CD8-positive, alpha-beta T cell (primary cell): ENCODE measurements at regions of chr2 and their contacts with region 1.

Region 1: GRCh38 chr2:72887754-72888437 is 688 bp downstream of the SPR start:
- DNase-seq: peak in 8 of 9 experiments; percentile 31 to 64 (median 52)
- ATAC-seq: peak; percentile 24
- H3K4me3 ChIP-seq: peak overlapping the region; percentile 49 to 70
- H3K4me3 Mint-ChIP-seq: peak overlapping the region; percentile 77
- H3K27ac ChIP-seq: no peak overlapping the region
- H3K27ac Mint-ChIP-seq: no peak overlapping the region
- H3K4me1 ChIP-seq: peaks cover 6% of the 10 kb centered on the region
- H3K4me1 Mint-ChIP-seq: peaks cover 7% of the 10 kb centered on the region
- H3K27me3 ChIP-seq: peaks cover 1 to 17% of the 10 kb centered on the region in 2 experiments
- H3K27me3 Mint-ChIP-seq: peaks cover 56% of the 10 kb centered on the region
- CTCF ChIP-seq: peak; percentile 54

Region 2: GRCh38 chr2:72770879-72771461 is 116.9 kb before region 1 on chr2:
- CTCF ChIA-PET with region 1: interaction called, 7 read pairs
- POLR2A ChIA-PET with region 1: no interaction called
- intact Hi-C with region 1: loop called in 1 of 2 experiments (anchors 1 kb)
- DNase-seq: peak; percentile 10 to 80 (median 57)
- ATAC-seq: peak; percentile 49
- H3K4me3 ChIP-seq: no peak overlapping the region
- H3K4me3 Mint-ChIP-seq: no peak overlapping the region
- H3K27ac ChIP-seq: no peak overlapping the region
- H3K27ac Mint-ChIP-seq: no peak overlapping the region
- H3K4me1 ChIP-seq: no peaks in the 10 kb centered on the region
- H3K4me1 Mint-ChIP-seq: no peaks in the 10 kb centered on the region
- H3K27me3 ChIP-seq: no peaks in the 10 kb centered on the region
- H3K27me3 Mint-ChIP-seq: no peaks in the 10 kb centered on the region
- CTCF ChIP-seq: peak; percentile 94

Region 3: GRCh38 chr2:72901426-72901825 is 13.5 kb after region 1 on chr2:
- CTCF ChIA-PET with region 1: interaction called, 11 read pairs
- POLR2A ChIA-PET with region 1: no interaction called
- intact Hi-C with region 1: no loop called
- DNase-seq: no peak
- ATAC-seq: no peak
- H3K4me3 ChIP-seq: no peak overlapping the region
- H3K4me3 Mint-ChIP-seq: no peak overlapping the region
- H3K27ac ChIP-seq: no peak overlapping the region
- H3K27ac Mint-ChIP-seq: no peak overlapping the region
- H3K4me1 ChIP-seq: no peaks in the 10 kb centered on the region
- H3K4me1 Mint-ChIP-seq: no peaks in the 10 kb centered on the region
- H3K27me3 ChIP-seq: peaks cover 2 to 4% of the 10 kb centered on the region in 2 experiments
- H3K27me3 Mint-ChIP-seq: peaks cover 54% of the 10 kb centered on the region
- CTCF ChIP-seq: no peak

Region 4: DNA sequence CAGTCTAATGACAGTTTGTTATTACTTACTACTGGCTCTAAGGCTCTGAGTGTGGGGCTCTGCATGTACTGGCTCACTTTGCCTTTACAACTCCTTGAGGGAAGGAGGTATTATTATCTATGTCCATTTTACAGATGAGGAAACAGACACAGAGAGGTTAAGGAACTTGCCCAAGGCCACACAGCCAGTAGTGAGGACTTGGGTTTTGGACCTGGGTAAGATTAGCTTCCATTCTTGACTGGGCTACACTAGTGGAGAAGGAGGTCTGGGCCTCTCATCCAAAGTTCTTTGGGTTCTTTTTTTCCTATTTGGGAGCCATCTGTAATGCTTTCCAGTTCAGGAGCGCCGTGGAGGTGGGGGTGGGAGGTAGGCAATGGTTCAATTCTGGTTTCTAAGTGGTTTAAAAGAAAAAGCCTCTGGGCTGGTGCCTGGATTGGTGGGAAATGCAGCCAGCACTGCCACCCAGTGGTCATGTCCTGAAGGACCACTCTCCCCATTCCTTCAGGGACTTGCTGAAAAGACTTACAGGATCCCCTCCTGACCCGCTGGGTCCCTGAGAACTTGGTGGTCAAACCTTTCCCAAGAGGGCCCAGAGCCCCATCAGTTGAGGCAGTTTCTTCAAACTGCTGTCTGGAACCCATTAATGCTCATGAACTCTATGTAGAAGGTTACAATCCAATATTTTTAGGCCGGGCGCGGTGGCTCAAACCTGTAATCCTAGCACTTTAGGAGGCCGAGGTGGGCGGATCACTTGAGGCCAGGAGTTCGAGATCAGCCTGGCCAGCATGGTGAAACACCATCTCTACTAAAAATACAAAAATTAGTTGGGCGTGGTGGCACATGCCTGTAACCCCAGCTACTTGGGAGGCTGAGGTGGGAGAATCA is 275.8 kb after region 1 on chr2:
- CTCF ChIA-PET with region 1: interaction called, 8 read pairs
- POLR2A ChIA-PET with region 1: no interaction called
- intact Hi-C with region 1: loop called (anchors 1 to 2 kb)
- DNase-seq: peak; percentile 31 to 77 (median 66)
- ATAC-seq: peak; percentile 86
- H3K4me3 ChIP-seq: no peak overlapping the region
- H3K4me3 Mint-ChIP-seq: no peak overlapping the region
- H3K27ac ChIP-seq: no peak overlapping the region
- H3K27ac Mint-ChIP-seq: no peak overlapping the region
- H3K4me1 ChIP-seq: no peaks in the 10 kb centered on the region
- H3K4me1 Mint-ChIP-seq: no peaks in the 10 kb centered on the region
- H3K27me3 ChIP-seq: no peaks in the 10 kb centered on the region
- H3K27me3 Mint-ChIP-seq: peaks cover 20% of the 10 kb centered on the region
- CTCF ChIP-seq: peak; percentile 78

Region 5: DNA sequence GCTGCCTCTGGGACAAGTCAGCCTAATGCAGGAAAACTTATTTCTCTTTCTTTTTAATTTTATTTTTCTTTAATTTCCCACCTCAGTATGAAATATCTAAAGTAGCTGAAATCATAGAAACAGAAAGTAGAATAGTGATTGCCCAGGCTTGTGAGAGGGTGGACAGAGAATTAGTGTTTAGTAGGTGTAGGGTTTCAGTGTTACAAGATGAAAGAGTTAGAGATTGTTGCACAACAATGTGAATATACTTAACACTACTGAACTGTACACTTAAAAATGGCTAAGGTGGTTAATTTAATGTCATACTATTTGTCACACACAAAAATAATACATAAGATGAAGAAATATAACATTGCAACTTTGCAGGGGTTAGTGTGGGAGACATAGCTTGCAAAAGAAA is 673.5 kb after region 1 on chr2:
- CTCF ChIA-PET with region 1: no interaction called
- POLR2A ChIA-PET with region 1: no interaction called
- intact Hi-C with region 1: loop called in 1 of 2 experiments (anchors 5 kb)
- DNase-seq: no peak
- ATAC-seq: no peak
- H3K4me3 ChIP-seq: no peak overlapping the region
- H3K4me3 Mint-ChIP-seq: no peak overlapping the region
- H3K27ac ChIP-seq: no peak overlapping the region
- H3K27ac Mint-ChIP-seq: no peak overlapping the region
- H3K4me1 ChIP-seq: no peaks in the 10 kb centered on the region
- H3K4me1 Mint-ChIP-seq: no peaks in the 10 kb centered on the region
- H3K27me3 ChIP-seq: no peaks in the 10 kb centered on the region
- H3K27me3 Mint-ChIP-seq: no peaks in the 10 kb centered on the region
- CTCF ChIP-seq: no peak